Posterior vena cava (tissue), 2 donors: ENCODE measurements at regions of chr3 and their contacts with region 1.

Region 1: DNA sequence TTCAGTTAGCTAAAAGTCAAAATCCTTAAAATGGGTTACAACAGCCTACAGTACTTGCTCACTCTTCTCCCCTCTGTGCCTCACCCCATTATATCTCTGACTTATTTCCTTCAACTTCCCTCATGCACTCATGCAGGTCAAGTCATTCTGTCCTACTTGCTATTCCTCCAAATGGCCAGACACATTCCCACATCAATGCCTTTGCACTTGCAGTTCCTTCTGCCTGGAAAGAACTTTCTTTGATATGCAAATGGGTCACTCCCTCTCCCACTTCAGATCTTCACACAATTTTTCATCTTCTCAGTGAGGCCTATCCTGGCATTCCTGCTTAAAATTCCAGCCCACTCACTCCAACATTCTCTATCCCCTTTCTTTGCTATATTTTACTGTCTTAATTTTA is 547.2 kb upstream of the TGFBR2 start:
- DNase-seq: no peak

Region 2: DNA sequence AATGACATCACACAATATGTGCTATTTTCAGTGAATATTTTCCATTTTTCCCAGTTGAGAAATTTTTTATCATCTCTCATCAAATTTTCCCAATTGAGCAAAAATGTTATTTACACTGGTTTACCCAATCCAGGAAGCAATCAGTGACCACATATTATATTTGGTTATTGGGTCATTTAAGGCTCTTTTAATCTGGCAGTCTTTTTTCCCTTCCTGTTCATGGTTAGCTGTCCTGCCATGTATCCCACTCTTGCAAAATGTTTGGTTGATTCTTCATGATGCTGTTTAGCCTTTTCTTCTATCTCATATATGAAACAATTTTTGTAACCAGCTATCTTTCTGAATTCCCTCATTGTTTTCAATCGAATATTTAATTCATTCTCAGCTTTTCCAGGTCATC is 152.3 kb before region 1 on chr3:
- intact Hi-C with region 1: loop called in 1 of 2 experiments (anchors 5 kb)
- DNase-seq: no peak